ENCODE measurements at regions of chr17 and their contacts with region 1.

Region 1: DNA sequence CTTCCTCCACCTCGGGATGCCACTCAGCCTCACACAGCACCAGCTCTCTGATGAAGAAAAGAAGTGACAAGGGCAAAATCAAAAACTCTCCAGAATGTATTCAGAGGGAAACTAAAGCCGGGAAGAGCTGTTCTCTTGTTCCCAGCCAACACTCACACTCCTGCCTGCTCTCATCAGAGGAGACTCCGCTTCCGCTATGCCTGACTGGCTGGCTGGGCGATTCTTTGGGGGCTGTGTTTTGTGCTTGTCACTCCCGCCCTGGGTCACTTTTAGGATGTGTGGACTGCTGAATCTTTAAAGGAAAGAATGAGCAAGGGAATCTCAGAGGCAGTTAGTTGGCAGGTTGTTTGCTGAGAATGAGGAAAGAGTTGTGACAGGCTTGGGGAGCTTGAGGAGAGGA is 54.6 kb upstream of the TBX2 start:
- DNase-seq: no peak
- ATAC-seq: no peak
- H3K4me3 ChIP-seq: no peak overlapping the region
- H3K27ac ChIP-seq: no peak overlapping the region
- H3K4me1 ChIP-seq: peaks cover 9% of the 10 kb centered on the region
- CTCF ChIP-seq: no peak
- EP300 ChIP-seq: no peak
- POLR2A ChIP-seq: no peak
- RAD21 ChIP-seq: no peak

Region 2: GRCh38 chr17:61361084-61361483 is 16.0 kb after region 1 on chr17:
- CTCF ChIA-PET with region 1: interaction called, 12 read pairs
- POLR2A ChIA-PET with region 1: no interaction called
- DNase-seq: no peak
- ATAC-seq: no peak
- H3K4me3 ChIP-seq: no peak overlapping the region
- H3K27ac ChIP-seq: peak overlapping the region; percentile 58 to 60; a peak in 4 of 6 replicates
- H3K4me1 ChIP-seq: peaks cover 42% of the 10 kb centered on the region
- CTCF ChIP-seq: no peak
- EP300 ChIP-seq: no peak
- POLR2A ChIP-seq: no peak
- RAD21 ChIP-seq: no peak

Measured in A549 (cell line).